ENCODE measurements at regions of chr6 and their contacts with region 1.

Region 1: DNA sequence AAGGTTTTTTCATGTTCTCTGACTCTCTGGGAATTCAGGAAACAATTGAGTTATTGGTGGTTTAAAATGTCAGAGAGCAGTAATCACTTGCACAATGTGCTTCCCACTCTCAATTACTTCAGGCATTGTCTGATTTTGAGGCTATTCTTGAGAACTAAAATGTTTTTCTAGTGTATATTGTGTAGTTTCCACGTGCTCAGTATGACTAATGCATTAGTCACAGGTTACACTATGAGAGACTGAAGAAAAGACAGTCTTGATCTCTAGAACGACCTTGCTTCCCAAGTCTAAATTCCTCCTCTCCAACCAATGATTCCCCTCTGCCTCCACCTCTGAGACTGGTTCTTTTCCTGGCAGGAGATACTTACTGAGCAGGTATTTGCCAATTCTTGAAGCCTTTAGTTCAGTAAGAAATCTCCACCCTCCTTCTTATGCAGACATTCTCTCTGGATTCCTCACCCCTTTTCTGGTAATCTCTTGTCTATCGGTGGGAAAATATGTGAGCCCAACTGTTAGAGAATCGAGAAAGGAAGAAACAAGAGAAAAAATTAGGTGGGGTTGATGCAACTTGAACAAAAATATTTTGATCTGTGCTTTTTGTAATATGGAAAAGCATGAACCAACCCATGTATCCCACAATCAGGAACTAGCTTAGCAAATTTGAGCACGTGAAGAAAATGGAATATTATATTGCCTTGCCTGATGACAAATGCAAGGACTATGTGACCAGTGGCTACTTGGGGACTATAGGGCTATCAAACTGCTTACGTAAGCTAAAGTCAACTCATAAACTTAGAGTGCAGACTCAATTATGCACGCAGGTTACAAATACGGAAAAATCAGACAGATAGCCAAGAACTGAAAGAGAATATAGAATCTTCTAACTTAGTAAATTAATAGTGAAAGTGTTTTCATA is 61.1 kb upstream of the SLC22A16 start:
- DNase-seq: peak; percentile 94

Region 2: DNA sequence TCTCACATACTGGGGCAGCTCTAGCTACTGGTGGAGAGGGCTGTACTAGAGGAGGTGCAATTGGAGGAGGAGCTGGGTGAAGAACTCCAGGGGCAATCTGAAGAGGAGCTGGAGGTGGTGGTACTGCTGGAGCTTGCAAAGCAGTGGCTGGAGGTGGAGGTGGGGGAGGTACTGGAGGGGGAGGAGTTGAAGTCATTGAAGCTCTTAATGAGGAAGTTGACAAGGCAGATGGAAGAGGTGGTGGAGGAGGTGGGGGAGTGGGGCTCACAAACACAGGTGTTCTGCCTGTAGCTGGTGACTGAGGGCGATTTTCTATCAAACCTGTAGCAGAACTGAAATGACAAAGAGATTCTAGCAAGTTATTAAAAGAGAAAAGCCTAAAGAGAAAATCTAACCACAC is 435.6 kb before region 1 on chr6:
- in situ Hi-C with region 1: no loop called
- DNase-seq: no peak

Region 3: GRCh38 chr6:110567957-110568696 is 30.7 kb after region 1 on chr6:
- in situ Hi-C with region 1: no loop called
- DNase-seq: no peak

Region 4: GRCh38 chr6:110671116-110671846 is 133.8 kb after region 1 on chr6:
- in situ Hi-C with region 1: loop called (anchors 10 kb)
- DNase-seq: no peak

Measured in SK-MEL-5 (cell line).